MCF 10A (cell line): ENCODE measurements at regions of chr4 and their contacts with region 1.

Region 1: DNA sequence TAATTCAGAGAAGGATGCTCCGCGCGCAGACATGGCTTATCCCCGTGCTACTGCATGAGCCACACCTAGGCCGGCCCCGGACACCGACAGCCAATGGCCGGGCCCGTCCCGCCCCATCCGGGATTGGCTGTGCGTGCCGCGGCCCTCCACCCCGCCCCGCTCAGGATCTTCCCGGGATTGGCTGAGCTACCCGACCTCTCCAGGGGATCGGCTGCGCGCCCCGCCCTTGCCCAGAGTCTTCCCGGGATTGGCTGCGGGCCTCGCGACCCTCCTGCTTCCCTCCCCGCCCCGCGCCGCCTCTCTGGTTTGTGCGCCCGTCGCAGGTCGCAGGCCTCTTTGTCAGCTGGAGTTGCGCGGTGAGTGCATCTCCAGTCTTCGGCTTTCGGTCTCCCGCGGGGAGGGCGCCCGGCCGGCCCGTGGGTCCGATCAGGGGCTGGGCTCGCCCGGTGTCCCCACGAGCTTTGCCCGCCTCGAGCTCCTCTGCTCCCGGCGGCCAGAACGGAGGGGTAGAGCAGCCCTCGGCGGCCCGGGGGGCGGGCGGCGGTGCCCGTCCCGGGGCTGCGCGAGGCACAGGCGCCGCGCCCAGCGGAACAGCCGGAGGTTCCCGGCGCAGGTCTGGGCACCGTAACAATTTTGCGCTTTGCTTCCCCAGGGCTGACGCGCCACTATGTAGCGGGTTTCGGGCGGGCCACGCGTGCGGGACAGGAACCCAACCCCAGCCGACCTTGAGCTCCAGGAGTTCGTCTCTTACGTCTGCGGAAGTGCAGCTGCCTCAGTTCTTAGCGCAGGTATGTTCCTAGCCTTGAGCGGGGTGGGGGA is 38.8 kb downstream of the ERVMER34-1 start:
- DNase-seq: peak; percentile 97
- H3K4me3 Mint-ChIP-seq: peak overlapping the region; percentile 84
- H3K27ac Mint-ChIP-seq: peak overlapping the region; percentile 94
- H3K4me1 Mint-ChIP-seq: peaks cover 20% of the 10 kb centered on the region
- H3K27me3 Mint-ChIP-seq: no peaks in the 10 kb centered on the region
- CTCF ChIP-seq: no peak

Region 2: GRCh38 chr4:52545099-52546069 is 167.0 kb before region 1 on chr4:
- CTCF ChIA-PET with region 1: interaction called, 19 read pairs
- POLR2A ChIA-PET with region 1: interaction called, 7 read pairs
- intact Hi-C with region 1: loop called (anchors 2 kb)
- DNase-seq: peak; percentile 78
- H3K4me3 Mint-ChIP-seq: no peak overlapping the region
- H3K27ac Mint-ChIP-seq: no peak overlapping the region
- H3K4me1 Mint-ChIP-seq: no peaks in the 10 kb centered on the region
- H3K27me3 Mint-ChIP-seq: no peaks in the 10 kb centered on the region
- CTCF ChIP-seq: peak; percentile 89

Region 3: GRCh38 chr4:52659001-52659721 is 53.2 kb before region 1 on chr4 and contains the start of gene USP46:
- CTCF ChIA-PET with region 1: interaction called, 3 read pairs
- POLR2A ChIA-PET with region 1: interaction called, 61 read pairs
- intact Hi-C with region 1: loop called (anchors 1 kb)
- DNase-seq: peak; percentile 76
- H3K4me3 Mint-ChIP-seq: peak within 1 kb of the TSS; percentile 77
- H3K27ac Mint-ChIP-seq: peak within 1 kb of the TSS; percentile 26
- H3K4me1 Mint-ChIP-seq: peaks cover 34% of the 10 kb centered on the region
- H3K27me3 Mint-ChIP-seq: no peaks in the 10 kb centered on the region
- CTCF ChIP-seq: no peak
- total RNA-seq, gene USP46: 16.8 and 23.0 TPM in 2 replicates

Region 4: GRCh38 chr4:52670739-52671138 is 41.6 kb before region 1 on chr4:
- CTCF ChIA-PET with region 1: no interaction called
- POLR2A ChIA-PET with region 1: no interaction called
- intact Hi-C with region 1: no loop called
- DNase-seq: no peak
- H3K4me3 Mint-ChIP-seq: no peak overlapping the region
- H3K27ac Mint-ChIP-seq: no peak overlapping the region
- H3K4me1 Mint-ChIP-seq: no peaks in the 10 kb centered on the region
- H3K27me3 Mint-ChIP-seq: no peaks in the 10 kb centered on the region
- CTCF ChIP-seq: no peak

Region 5: DNA sequence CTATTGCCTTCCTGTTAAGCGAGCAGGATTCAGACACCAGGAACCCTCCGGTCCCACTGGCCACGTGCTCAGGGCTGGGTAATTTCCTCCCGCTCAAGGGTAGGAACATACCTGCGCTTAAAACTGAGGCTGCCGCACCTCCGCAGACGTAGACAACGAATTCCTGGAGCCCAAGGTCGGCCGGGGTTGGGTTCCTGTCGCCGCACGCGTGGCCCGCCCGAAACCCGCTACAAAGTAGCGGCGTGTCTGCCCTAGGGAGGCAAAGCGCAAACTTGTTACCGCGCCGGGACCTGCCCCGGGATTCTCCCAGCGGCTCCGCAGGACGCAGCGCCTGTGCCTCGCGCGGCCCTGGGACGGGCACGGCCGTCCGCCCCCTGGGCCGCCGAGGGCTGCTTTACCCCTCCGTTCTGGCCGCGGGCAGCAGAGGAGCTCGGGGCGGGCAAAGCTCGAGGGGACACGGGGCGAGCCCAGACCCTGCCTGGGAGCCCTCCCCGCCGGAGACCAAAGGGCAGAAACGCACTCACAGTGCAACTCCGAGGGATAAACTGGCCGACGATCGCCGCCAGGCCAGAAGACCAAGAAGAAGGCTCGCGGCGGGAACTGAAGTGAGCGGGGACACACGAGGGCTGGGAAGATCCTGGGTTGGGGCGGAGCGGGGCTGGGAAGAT is 38.6 kb after region 1 on chr4 and contains the start of gene ERVMER34-1:
- CTCF ChIA-PET with region 1: interaction called, 3 read pairs
- POLR2A ChIA-PET with region 1: interaction called, 5 read pairs
- intact Hi-C with region 1: loop called (anchors 1 kb)
- DNase-seq: peak; percentile 29
- H3K4me3 Mint-ChIP-seq: peak within 1 kb of the TSS; percentile 81
- H3K27ac Mint-ChIP-seq: peak within 1 kb of the TSS; percentile 81
- H3K4me1 Mint-ChIP-seq: no peaks in the 10 kb centered on the region
- H3K27me3 Mint-ChIP-seq: no peaks in the 10 kb centered on the region
- CTCF ChIP-seq: no peak
- total RNA-seq, gene ERVMER34-1: 6.2 and 6.7 TPM in 2 replicates

Region 6: GRCh38 chr4:52837726-52838558 is 125.6 kb after region 1 on chr4:
- CTCF ChIA-PET with region 1: interaction called, 4 read pairs
- POLR2A ChIA-PET with region 1: interaction called, 51 read pairs
- intact Hi-C with region 1: loop called (anchors 5 kb)
- DNase-seq: peak; percentile 91
- H3K4me3 Mint-ChIP-seq: peak overlapping the region; percentile 60
- H3K27ac Mint-ChIP-seq: peak overlapping the region; percentile 92
- H3K4me1 Mint-ChIP-seq: peaks cover 47% of the 10 kb centered on the region
- H3K27me3 Mint-ChIP-seq: no peaks in the 10 kb centered on the region
- CTCF ChIP-seq: no peak

Region 7: DNA sequence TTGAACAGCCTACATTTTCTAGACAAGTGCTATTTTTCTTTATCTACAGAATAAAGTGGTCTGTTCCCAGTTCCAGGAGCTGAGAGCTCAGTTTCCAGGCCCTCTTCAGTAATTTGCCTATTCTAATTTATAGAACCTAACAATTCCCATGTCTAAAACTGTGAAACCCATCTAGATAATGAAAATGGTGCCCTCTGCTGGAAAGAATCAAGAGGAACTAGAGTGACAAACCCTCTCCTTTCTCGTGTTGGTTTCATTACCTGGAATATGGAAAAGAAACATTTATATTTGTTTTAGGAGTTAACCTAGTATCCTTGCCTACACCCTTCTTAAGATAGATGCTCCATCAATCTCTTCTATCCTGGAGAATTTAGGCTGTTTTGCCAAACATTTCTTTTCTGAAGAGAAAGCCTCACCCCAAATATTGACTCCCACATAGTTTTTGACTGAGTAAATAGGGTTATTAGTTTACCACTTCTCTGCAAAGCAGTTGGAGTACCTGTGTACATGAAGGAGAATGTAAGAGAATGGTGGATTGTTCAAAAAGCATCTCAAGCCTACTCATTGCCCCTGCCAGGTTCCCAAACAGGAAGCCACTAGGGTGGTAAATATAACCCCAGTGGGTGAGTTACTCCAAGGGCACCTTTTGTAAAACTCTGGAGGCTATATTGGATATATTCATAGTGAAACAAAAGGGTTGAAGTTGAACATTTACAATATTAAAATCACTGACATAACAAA is 271.4 kb after region 1 on chr4:
- CTCF ChIA-PET with region 1: interaction called, 29 read pairs
- POLR2A ChIA-PET with region 1: no interaction called
- intact Hi-C with region 1: loop called (anchors 2 kb)
- DNase-seq: peak; percentile 77
- H3K4me3 Mint-ChIP-seq: no peak overlapping the region
- H3K27ac Mint-ChIP-seq: no peak overlapping the region
- H3K4me1 Mint-ChIP-seq: no peaks in the 10 kb centered on the region
- H3K27me3 Mint-ChIP-seq: no peaks in the 10 kb centered on the region
- CTCF ChIP-seq: peak; percentile 50

Region 8: GRCh38 chr4:53450773-53451172 is 738.4 kb after region 1 on chr4:
- CTCF ChIA-PET with region 1: no interaction called
- POLR2A ChIA-PET with region 1: no interaction called
- intact Hi-C with region 1: no loop called
- DNase-seq: no peak
- H3K4me3 Mint-ChIP-seq: no peak overlapping the region
- H3K27ac Mint-ChIP-seq: no peak overlapping the region
- H3K4me1 Mint-ChIP-seq: no peaks in the 10 kb centered on the region
- H3K27me3 Mint-ChIP-seq: no peaks in the 10 kb centered on the region
- CTCF ChIP-seq: no peak